PC-3 (cell line): ENCODE measurements at regions of chr2 and their contacts with region 1.

Region 1: GRCh38 chr2:120520929-120521912 is 175.3 kb downstream of the INHBB start:
- DNase-seq: peak; percentile 79
- ATAC-seq: peak; percentile 84
- H3K4me3 ChIP-seq: no peak overlapping the region
- H3K27ac ChIP-seq: no peak overlapping the region
- H3K4me1 ChIP-seq: peaks cover 11% of the 10 kb centered on the region
- H3K27me3 ChIP-seq: no peaks in the 10 kb centered on the region
- CTCF ChIP-seq: peak; percentile 92

Region 2: DNA sequence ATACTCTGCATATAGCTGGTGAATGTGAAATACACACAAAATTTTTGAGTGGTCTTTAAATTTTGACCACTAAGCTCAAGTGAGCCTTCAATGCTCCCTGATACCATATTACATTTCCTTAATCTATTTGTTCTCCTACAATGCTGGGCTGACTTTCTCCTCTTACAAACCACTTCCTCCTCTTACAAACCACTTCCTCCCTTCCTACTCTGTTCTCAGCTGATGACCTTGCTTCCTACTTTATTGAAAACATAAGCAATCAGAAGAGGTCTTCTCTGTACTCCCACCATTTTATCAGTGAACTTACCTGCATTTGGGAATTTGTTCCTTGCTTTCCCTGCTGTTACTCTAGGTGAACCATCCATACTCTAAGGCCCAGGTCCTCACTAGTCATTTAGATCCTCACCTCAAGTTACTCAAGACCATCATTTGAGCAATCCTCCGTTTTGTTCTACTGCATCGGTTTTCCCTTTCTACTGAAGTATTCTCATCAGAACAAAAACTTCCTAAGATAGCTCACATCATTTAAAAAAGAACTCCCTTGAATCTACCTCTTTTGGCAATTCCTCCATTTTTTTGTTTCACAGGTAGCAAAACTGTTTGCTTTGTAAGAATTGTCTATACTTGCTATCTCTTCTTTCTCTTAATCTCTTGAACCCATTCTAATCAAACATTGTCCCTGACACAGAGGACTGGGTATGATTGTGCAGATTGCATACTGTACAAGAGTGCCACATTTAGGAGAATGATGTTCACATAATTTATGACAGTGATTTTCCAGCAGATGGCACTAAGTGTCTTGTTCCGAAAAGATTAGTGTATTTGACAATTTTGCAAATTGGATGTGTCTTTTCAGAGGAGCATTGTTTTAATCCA is 411.8 kb before region 1 on chr2:
- CTCF ChIA-PET with region 1: no interaction called
- POLR2A ChIA-PET with region 1: no interaction called
- intact Hi-C with region 1: no loop called
- DNase-seq: peak; percentile 76
- ATAC-seq: peak; percentile 56
- H3K4me3 ChIP-seq: 0 out of 2 replicates have a peak overlapping the region, but pooled peaks have one; percentile 29
- H3K27ac ChIP-seq: peak overlapping the region; percentile 83
- H3K4me1 ChIP-seq: peaks cover 45% of the 10 kb centered on the region
- H3K27me3 ChIP-seq: no peaks in the 10 kb centered on the region
- CTCF ChIP-seq: peak; percentile 86

Region 3: DNA sequence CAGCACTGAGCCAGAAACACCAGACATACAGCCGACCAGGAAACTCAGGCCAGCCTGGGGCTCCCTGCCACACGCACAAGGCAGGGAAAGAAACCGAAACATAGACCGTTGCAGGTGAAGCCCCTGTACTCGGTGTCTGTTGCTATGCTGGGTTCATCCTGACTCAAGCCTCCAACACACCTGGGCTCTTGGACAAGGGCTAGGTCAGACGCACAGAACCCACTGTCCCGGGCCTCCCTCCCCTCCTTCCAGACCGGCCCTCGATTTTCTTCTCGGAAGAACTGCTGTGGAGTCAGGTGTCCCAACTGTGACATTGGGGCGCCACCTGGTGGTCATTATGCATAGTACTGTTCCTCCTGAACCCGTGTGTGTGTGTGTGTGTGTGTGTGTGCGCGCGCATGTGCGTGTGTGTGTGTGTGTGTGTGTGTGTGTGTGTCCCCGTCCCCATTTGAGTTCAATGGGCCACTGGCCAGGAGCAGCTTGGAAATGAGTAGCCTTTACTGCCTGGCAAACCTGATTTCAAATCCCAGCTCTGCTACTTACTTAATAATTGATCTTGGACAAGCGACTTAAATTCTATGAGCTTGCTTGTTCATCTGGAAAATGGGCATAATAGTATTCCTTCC is 159.0 kb after region 1 on chr2:
- CTCF ChIA-PET with region 1: no interaction called
- POLR2A ChIA-PET with region 1: no interaction called
- intact Hi-C with region 1: loop called (anchors 10 kb)
- DNase-seq: peak; percentile 87
- ATAC-seq: peak; percentile 77
- H3K4me3 ChIP-seq: 0 out of 2 replicates have a peak overlapping the region, but pooled peaks have one; percentile 22
- H3K27ac ChIP-seq: no peak overlapping the region
- H3K4me1 ChIP-seq: peaks cover 14% of the 10 kb centered on the region
- H3K27me3 ChIP-seq: no peaks in the 10 kb centered on the region
- CTCF ChIP-seq: peak; percentile 60

Region 4: DNA sequence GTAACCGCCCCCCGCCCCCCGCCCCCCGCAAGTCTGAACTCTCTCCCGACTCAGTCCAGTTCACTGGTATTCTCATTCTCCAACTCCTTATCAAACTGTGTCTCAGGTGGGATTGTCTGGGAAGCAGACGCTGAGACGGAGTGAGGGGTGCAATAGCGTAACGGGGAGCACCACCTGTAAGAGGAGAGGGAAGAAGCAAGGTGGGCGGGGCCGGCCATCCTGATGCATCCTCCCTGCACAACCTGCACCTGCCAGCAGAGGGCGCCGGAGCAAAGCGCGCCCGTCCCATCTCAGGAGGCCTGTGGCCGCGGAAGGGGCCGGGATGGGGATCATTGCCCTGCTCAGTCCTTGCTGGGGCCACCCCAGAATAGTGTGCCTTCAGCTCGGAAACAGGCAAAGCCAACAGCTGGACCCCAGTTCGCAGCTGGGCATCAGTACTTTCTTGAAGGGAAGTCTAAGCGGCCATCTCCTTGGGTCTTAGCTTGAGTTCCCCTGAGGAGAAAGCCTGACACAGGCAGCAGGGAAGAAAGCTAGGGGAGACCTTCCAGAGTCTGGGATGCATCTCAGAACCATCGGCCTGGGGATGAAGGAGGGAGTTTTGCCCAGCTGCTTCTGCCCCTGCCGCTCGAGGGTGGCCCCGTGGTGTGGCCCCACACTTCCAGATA is 555.8 kb after region 1 on chr2:
- CTCF ChIA-PET with region 1: no interaction called
- POLR2A ChIA-PET with region 1: no interaction called
- intact Hi-C with region 1: no loop called
- DNase-seq: peak; percentile 81
- ATAC-seq: peak; percentile 48
- H3K4me3 ChIP-seq: peak overlapping the region; percentile 38; the same call in 1 of the 2 replicates
- H3K27ac ChIP-seq: no peak overlapping the region
- H3K4me1 ChIP-seq: peaks cover 30% of the 10 kb centered on the region
- H3K27me3 ChIP-seq: no peaks in the 10 kb centered on the region
- CTCF ChIP-seq: peak; percentile 96